ENCODE measurements at regions of chr16 and their contacts with region 1.

Region 1: GRCh38 chr16:72400257-72400882 is 228.4 kb upstream of the PMFBP1 start:
- DNase-seq: peak; percentile 76
- H3K4me3 ChIP-seq: no peak overlapping the region
- H3K27ac ChIP-seq: no peak overlapping the region
- H3K4me1 ChIP-seq: no peaks in the 10 kb centered on the region
- H3K27me3 ChIP-seq: no peaks in the 10 kb centered on the region
- CTCF ChIP-seq: peak; percentile 64 to 73
- POLR2A ChIP-seq: no peak

Region 2: DNA sequence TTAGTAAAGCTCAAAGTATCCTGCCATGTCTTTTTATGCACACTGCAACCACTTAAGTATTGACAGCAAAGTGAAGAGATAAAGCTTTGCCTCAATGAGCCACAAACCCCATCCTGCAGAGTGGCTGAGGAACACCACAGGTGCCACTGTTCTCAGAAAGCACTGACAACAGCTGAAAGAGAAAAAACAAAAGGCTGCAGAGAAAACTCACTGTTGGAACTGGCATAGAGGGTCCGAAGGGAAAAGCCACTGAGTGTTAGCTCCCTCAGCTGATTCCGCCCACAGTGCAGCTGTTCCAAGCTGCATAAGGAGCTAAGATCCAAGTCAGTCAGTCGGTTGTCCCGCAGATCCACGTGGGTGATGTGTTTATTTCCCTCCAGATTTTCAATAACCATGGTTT is 724.1 kb before region 1 on chr16:
- CTCF ChIA-PET with region 1: no interaction called
- POLR2A ChIA-PET with region 1: no interaction called
- dilution Hi-C with region 1: no loop called
- intact Hi-C with region 1: no loop called
- DNase-seq: no peak
- H3K4me3 ChIP-seq: no peak overlapping the region
- H3K27ac ChIP-seq: no peak overlapping the region
- H3K4me1 ChIP-seq: no peaks in the 10 kb centered on the region
- H3K27me3 ChIP-seq: no peaks in the 10 kb centered on the region
- CTCF ChIP-seq: no peak
- POLR2A ChIP-seq: no peak

Region 3: GRCh38 chr16:72137380-72138063 is 262.8 kb before region 1 on chr16:
- CTCF ChIA-PET with region 1: no interaction called
- POLR2A ChIA-PET with region 1: no interaction called
- dilution Hi-C with region 1: no loop called
- intact Hi-C with region 1: no loop called
- DNase-seq: no peak
- H3K4me3 ChIP-seq: no peak overlapping the region
- H3K27ac ChIP-seq: no peak overlapping the region
- H3K4me1 ChIP-seq: no peaks in the 10 kb centered on the region
- H3K27me3 ChIP-seq: no peaks in the 10 kb centered on the region
- CTCF ChIP-seq: no peak
- POLR2A ChIP-seq: no peak

Region 4: DNA sequence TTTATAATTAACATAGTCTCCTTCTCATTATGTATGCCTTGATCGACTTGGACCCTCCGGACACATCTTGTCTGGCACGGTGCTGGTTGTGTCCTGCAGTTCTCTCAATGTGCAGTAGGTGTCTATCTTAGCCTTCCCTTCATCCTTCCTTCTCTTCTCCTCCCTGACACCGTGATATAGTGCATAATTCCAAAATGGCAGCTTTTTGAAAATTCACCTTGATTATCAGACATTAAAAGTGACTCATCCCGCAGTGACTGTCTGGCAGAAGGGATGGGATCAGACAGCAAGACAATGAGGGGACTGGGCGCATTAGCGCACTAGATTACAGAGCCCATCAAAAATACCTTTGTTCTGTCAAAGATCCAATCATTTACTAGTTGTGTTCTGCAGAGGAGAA is 158.4 kb before region 1 on chr16:
- CTCF ChIA-PET with region 1: interaction called, 19 read pairs
- POLR2A ChIA-PET with region 1: no interaction called
- dilution Hi-C with region 1: no loop called
- intact Hi-C with region 1: loop called (anchors 1 kb)
- DNase-seq: peak; percentile 66
- H3K4me3 ChIP-seq: no peak overlapping the region
- H3K27ac ChIP-seq: no peak overlapping the region
- H3K4me1 ChIP-seq: no peaks in the 10 kb centered on the region
- H3K27me3 ChIP-seq: no peaks in the 10 kb centered on the region
- CTCF ChIP-seq: peak; percentile 79 to 85
- POLR2A ChIP-seq: no peak

Region 5: DNA sequence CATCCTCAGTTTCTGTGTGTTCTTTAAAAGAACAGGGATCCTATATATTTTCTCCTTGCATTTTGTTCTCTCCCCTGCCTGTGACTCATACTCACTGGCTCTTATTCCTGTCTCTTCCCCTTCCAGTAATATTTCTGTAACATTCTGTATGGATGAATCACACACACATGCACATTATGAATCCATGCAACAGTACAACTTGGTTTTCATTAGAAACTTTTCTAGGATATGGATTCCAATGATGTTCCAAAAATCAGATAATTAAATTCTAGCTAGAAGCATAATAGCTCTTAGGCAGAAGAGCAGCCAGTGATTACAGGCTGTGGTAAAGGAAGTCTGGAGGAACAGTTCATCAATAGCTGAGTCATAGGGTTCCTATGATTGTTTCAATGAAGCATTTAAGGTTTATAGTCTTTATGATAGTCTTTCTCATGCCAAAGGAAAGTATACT is 108.8 kb before region 1 on chr16:
- CTCF ChIA-PET with region 1: interaction called, 14 read pairs
- POLR2A ChIA-PET with region 1: no interaction called
- dilution Hi-C with region 1: no loop called
- intact Hi-C with region 1: no loop called
- DNase-seq: peak; percentile 87
- H3K4me3 ChIP-seq: peak overlapping the region in 1 of 3 experiments; percentile 44
- H3K27ac ChIP-seq: peak overlapping the region; percentile 97
- H3K4me1 ChIP-seq: peaks cover 32% of the 10 kb centered on the region
- H3K27me3 ChIP-seq: no peaks in the 10 kb centered on the region
- CTCF ChIP-seq: no peak
- POLR2A ChIP-seq: peak; percentile 45

Region 6: DNA sequence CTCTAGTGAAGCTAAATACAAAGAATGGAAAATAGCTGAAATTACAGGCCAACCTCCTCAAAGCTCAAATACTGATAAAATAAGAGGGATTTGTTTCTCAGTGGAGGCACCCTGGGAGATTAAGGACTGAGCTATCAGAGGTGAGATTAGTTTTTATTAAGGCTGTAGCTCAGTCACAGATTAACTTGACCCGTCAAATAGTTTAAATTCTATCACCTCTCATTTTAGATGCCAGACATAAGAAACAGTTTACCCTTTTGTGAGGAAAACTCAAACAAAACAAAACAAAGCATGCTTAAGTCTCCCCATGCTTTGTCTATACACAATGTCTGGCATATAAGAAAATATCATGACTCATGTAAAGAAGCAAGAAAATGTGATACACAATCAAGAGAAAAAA is 20.1 kb before region 1 on chr16:
- CTCF ChIA-PET with region 1: interaction called, 19 read pairs
- POLR2A ChIA-PET with region 1: no interaction called
- dilution Hi-C with region 1: no loop called
- intact Hi-C with region 1: no loop called
- DNase-seq: peak; percentile 25
- H3K4me3 ChIP-seq: no peak overlapping the region
- H3K27ac ChIP-seq: peak overlapping the region; percentile 7
- H3K4me1 ChIP-seq: no peaks in the 10 kb centered on the region
- H3K27me3 ChIP-seq: no peaks in the 10 kb centered on the region
- CTCF ChIP-seq: no peak
- POLR2A ChIP-seq: no peak

Region 7: GRCh38 chr16:72415379-72415778 is 15.0 kb after region 1 on chr16:
- CTCF ChIA-PET with region 1: interaction called, 25 read pairs
- POLR2A ChIA-PET with region 1: no interaction called
- dilution Hi-C with region 1: no loop called
- intact Hi-C with region 1: no loop called
- DNase-seq: no peak
- H3K4me3 ChIP-seq: no peak overlapping the region
- H3K27ac ChIP-seq: no peak overlapping the region
- H3K4me1 ChIP-seq: no peaks in the 10 kb centered on the region
- H3K27me3 ChIP-seq: no peaks in the 10 kb centered on the region
- CTCF ChIP-seq: no peak
- POLR2A ChIP-seq: no peak

Region 8: GRCh38 chr16:73196670-73197069 is 796.3 kb after region 1 on chr16:
- CTCF ChIA-PET with region 1: interaction called, 3 read pairs
- POLR2A ChIA-PET with region 1: no interaction called
- dilution Hi-C with region 1: no loop called
- intact Hi-C with region 1: loop called (anchors 5 kb)
- DNase-seq: peak; percentile 78
- H3K4me3 ChIP-seq: no peak overlapping the region
- H3K27ac ChIP-seq: no peak overlapping the region
- H3K4me1 ChIP-seq: no peaks in the 10 kb centered on the region
- H3K27me3 ChIP-seq: peaks cover 5 to 10% of the 10 kb centered on the region in 2 experiments
- CTCF ChIP-seq: peak; percentile 56 to 60
- POLR2A ChIP-seq: no peak

Region 9: GRCh38 chr16:73956587-73957494 is 1556.5 kb after region 1 on chr16:
- CTCF ChIA-PET with region 1: no interaction called
- POLR2A ChIA-PET with region 1: no interaction called
- dilution Hi-C with region 1: no loop called
- intact Hi-C with region 1: loop called (anchors 5 kb)
- DNase-seq: peak; percentile 53
- H3K4me3 ChIP-seq: no peak overlapping the region
- H3K27ac ChIP-seq: no peak overlapping the region
- H3K4me1 ChIP-seq: no peaks in the 10 kb centered on the region
- H3K27me3 ChIP-seq: no peaks in the 10 kb centered on the region
- CTCF ChIP-seq: peak; percentile 69 to 72
- POLR2A ChIP-seq: no peak